Activated T-helper 1 cell treated with anti-CD3 and anti-CD28 coated beads, Interleukin-12 subunit alpha, Interleukin-12 subunit beta, Interleukin-2, Interleukin-4 antibody, amounts not matched to agents 30 ng/mL and 10 ng/mL and 1 ng/mL, durations not matched to agents 14 hours and 24 hours and 36 hours (primary cell): ENCODE measurements at regions of chr2 and their contacts with region 1.

Region 1: DNA sequence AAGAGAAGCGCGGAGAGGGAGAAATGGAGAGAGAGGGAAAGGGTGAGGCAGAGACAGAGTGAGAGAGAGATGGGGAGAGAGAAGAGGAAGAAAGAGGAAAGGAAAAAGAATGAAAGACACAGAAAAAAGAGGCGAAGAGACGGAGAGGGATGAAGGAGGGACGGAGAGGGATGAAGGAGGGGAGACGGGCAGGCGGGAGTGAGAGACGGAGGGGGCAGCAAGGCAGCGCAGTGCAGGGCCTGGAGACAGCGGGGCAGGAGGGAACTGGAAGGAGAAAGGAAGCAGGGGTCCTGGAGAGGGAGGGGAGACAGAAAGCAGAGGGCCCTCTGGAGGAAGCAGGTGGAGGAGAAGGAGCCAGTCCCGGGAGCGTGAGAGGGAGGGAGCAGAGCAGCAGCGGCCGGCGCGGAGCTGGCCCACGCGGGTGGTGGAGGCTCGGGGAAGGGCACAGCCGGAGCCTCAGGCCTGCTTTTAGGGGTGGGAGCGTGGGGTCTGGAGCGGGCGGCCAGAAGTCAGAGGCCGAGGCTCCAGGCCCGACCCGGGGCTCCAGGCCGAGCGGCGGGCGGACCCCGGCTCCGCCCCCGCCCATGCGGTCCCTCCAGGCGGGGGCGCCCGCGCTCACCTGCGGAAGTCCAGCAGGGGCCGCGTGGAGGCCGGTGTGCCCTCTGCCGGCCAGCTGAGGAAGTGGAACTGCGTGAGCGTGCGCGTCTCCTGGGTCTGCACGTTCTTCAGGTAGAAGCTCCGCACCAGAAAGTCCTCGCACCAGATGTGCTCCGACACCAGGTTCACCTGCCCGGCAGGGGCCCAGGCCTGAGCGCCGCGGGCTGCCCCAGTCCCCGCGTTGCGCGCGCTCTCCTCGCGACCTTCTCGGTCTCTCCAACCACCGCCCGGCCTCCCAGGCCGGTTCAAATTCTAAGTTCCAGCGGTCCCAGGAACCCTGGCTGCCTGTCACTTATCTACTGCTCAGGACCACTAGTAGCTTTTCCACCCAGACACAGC is 14.5 kb downstream of the PTPRN start:
- DNase-seq: peak; percentile 87
- H3K4me3 Mint-ChIP-seq: peak overlapping the region; percentile 80
- H3K27ac Mint-ChIP-seq: peak overlapping the region; percentile 87
- H3K4me1 Mint-ChIP-seq: peaks cover 14% of the 10 kb centered on the region
- H3K27me3 Mint-ChIP-seq: peaks cover 17% of the 10 kb centered on the region

Region 2: GRCh38 chr2:218438601-218438995 is 856.1 kb before region 1 on chr2:
- intact Hi-C with region 1: no loop called
- DNase-seq: no peak
- H3K4me3 Mint-ChIP-seq: no peak overlapping the region
- H3K27ac Mint-ChIP-seq: no peak overlapping the region
- H3K4me1 Mint-ChIP-seq: no peaks in the 10 kb centered on the region
- H3K27me3 Mint-ChIP-seq: no peaks in the 10 kb centered on the region

Region 3: GRCh38 chr2:219155054-219155644 is 139.5 kb before region 1 on chr2:
- intact Hi-C with region 1: loop called (anchors 1 kb)
- DNase-seq: peak; percentile 19
- H3K4me3 Mint-ChIP-seq: no peak overlapping the region
- H3K27ac Mint-ChIP-seq: no peak overlapping the region
- H3K4me1 Mint-ChIP-seq: peaks cover 8% of the 10 kb centered on the region
- H3K27me3 Mint-ChIP-seq: no peaks in the 10 kb centered on the region

Region 4: GRCh38 chr2:219177552-219178376 is 116.9 kb before region 1 on chr2 and contains the start of gene RETREG2:
- intact Hi-C with region 1: loop called (anchors 2 kb)
- DNase-seq: peak; percentile 74
- H3K4me3 Mint-ChIP-seq: peak within 1 kb of the TSS; percentile 91
- H3K27ac Mint-ChIP-seq: peak within 1 kb of the TSS; percentile 96
- H3K4me1 Mint-ChIP-seq: peaks cover 72% of the 10 kb centered on the region
- H3K27me3 Mint-ChIP-seq: no peaks in the 10 kb centered on the region
- total RNA-seq, gene RETREG2: 58.4 and 61.5 TPM in 2 replicates

Region 5: DNA sequence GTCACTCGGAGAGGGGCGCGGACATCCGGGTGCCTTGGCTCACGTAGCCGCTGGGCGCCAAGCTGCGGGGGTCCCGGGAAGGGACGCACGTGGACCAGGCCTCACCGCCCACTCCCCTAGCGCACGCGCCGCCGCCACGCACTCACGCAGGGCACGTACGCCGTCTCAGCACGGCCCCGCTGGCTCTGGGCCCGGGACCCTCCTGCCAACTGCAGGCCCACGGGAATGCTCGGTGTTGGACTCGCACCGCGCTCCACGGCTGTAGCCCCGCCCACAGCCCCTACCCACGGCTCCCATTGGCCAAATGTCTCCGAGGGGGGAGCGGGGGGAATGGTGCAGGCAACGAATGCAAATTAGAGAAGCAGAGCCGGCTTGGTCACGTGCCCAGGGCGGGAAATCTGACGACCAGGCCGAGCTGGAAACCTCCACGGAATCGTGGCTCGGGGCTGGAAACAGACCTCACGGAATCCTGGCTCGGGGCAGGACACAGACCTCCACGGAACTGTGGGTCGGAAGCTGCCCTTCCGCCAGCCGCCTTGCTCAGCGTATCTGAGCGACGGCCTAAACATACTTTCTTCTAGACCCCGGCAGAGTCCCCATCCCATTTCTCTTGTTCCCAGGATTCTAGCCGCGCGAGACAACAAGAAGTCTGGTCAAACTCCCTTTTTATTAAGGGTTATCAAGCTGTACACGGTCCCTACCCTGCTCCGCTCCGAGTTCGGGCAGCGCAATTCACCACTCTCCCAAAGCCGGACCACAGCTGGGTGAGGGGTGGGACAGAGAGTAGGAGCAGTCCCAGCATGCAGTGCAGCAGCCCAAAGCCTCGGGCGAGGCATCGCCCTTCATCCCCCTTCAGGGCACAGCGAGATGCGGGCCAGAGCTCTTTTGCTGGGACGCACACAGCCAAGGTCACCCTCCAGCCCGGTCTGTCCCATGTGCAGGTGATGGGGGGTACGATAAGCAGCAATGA is 75.6 kb before region 1 on chr2 and contains the start of gene ABCB6:
- intact Hi-C with region 1: loop called (anchors 2 kb)
- DNase-seq: peak; percentile 86
- H3K4me3 Mint-ChIP-seq: peak within 1 kb of the TSS; percentile 87
- H3K27ac Mint-ChIP-seq: peak within 1 kb of the TSS; percentile 86
- H3K4me1 Mint-ChIP-seq: peaks cover 23% of the 10 kb centered on the region
- H3K27me3 Mint-ChIP-seq: no peaks in the 10 kb centered on the region
- total RNA-seq, gene ABCB6: 31.9 and 32.9 TPM in 2 replicates

Region 6: GRCh38 chr2:219245148-219245898 is 49.3 kb before region 1 on chr2 and contains the starts of genes GLB1L and STK16:
- intact Hi-C with region 1: loop called (anchors 2 kb)
- DNase-seq: peak; percentile 89
- H3K4me3 Mint-ChIP-seq: peak within 1 kb of the TSS; percentile 99
- H3K27ac Mint-ChIP-seq: peak within 1 kb of the TSS; percentile 99
- H3K4me1 Mint-ChIP-seq: peaks cover 57% of the 10 kb centered on the region
- H3K27me3 Mint-ChIP-seq: no peaks in the 10 kb centered on the region
- total RNA-seq, gene GLB1L: 4.6 and 4.9 TPM in 2 replicates
- total RNA-seq, gene STK16: 30.1 and 30.6 TPM in 2 replicates

Region 7: DNA sequence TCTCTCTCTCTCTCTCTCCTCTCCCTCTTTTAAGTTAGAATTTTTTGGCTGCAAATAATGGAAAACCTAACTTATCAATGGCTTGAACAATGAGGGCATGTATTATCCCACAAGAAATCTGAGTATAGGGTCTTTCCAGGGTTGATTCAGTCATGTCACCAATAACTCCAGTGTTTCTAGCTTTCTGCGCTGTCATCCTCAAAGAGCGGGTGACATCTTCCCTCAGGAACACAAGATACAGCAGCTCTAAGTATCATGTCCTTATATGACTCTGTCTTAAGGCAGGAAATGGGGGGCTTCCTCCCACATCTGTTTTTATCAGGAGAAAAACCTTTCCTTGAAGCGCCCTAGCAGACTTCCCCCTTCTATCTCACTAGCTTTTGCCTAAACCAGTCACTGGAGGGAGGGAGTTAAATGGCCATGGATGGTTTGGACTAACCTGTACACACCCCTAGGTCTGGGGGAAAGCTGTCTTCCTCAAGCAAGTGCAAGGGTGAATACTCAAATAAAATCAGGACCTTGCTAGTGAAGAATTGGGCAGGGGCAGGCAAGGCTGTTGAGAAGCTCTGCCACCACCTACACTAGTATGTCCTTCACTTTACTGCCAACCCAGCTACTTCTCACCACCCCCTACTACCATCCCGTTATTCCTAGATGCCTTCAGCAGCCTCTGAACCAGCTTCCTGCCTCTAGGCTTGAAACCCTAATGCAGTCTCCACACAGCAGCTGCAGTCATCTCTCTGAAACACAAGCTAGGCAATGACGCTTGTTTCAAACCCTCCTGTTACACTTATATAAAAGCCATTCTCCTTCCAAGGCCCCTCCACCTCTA is 33.4 kb before region 1 on chr2:
- intact Hi-C with region 1: no loop called
- DNase-seq: no peak
- H3K4me3 Mint-ChIP-seq: no peak overlapping the region
- H3K27ac Mint-ChIP-seq: no peak overlapping the region
- H3K4me1 Mint-ChIP-seq: peaks cover 3% of the 10 kb centered on the region
- H3K27me3 Mint-ChIP-seq: peaks cover 9% of the 10 kb centered on the region

Region 8: GRCh38 chr2:219278655-219279516 is 15.8 kb before region 1 on chr2 and contains the start of gene DNAJB2:
- intact Hi-C with region 1: loop called (anchors 1 kb)
- DNase-seq: peak; percentile 99
- H3K4me3 Mint-ChIP-seq: peak within 1 kb of the TSS; percentile 94
- H3K27ac Mint-ChIP-seq: peak within 1 kb of the TSS; percentile 99
- H3K4me1 Mint-ChIP-seq: peaks cover 45% of the 10 kb centered on the region
- H3K27me3 Mint-ChIP-seq: peaks cover under 1% of the 10 kb centered on the region
- total RNA-seq, gene DNAJB2: 40.8 and 45.3 TPM in 2 replicates

Region 9: GRCh38 chr2:219656526-219656925 is 361.9 kb after region 1 on chr2:
- intact Hi-C with region 1: no loop called
- DNase-seq: no peak
- H3K4me3 Mint-ChIP-seq: no peak overlapping the region
- H3K27ac Mint-ChIP-seq: no peak overlapping the region
- H3K4me1 Mint-ChIP-seq: no peaks in the 10 kb centered on the region
- H3K27me3 Mint-ChIP-seq: peaks cover 29% of the 10 kb centered on the region